ENCODE measurements at regions of chr2 and their contacts with region 1.

Region 1: GRCh38 chr2:232113821-232114220 is 152.3 kb downstream of the DIS3L2 start:
- DNase-seq: no peak
- H3K4me3 ChIP-seq: no peak overlapping the region
- H3K27ac ChIP-seq: no peak overlapping the region
- H3K4me1 ChIP-seq: no peaks in the 10 kb centered on the region
- H3K27me3 ChIP-seq: no peaks in the 10 kb centered on the region
- CTCF ChIP-seq: no peak
- EP300 ChIP-seq: no peak
- POLR2A ChIP-seq: no peak

Region 2: GRCh38 chr2:230885463-230886130 is 1228.2 kb before region 1 on chr2:
- in situ Hi-C with region 1: no loop called
- intact Hi-C with region 1: loop called (anchors 5 kb)
- DNase-seq: no peak
- H3K4me3 ChIP-seq: no peak overlapping the region
- H3K27ac ChIP-seq: no peak overlapping the region
- H3K4me1 ChIP-seq: peaks cover 0 to 6% (median under 1%) of the 10 kb centered on the region in 4 donors
- H3K27me3 ChIP-seq: no peaks in the 10 kb centered on the region
- CTCF ChIP-seq: no peak
- EP300 ChIP-seq: no peak
- POLR2A ChIP-seq: no peak

Region 3: DNA sequence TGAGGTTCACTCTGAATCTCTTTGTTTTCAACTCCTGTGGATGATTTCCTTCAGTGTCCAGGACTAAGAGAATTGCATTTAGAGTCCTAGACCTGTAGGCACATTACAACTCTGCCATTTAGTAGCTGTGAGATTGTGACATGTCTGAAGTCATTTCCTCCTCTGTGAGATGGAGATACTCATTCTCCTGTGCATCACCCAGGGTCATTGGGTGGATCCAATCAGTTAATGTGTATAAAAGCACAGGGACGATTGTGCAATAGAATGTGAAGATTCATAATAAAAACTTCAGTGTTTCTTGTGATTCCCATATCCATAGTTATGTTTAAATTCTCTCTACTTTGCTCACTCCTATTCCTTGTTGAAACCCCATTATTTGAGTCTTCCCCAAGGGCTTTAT is 38.7 kb before region 1 on chr2:
- in situ Hi-C with region 1: no loop called
- intact Hi-C with region 1: loop called (anchors 1 kb)
- DNase-seq: no peak
- H3K4me3 ChIP-seq: no peak overlapping the region
- H3K27ac ChIP-seq: no peak overlapping the region
- H3K4me1 ChIP-seq: peaks cover 0 to 1% (median 0%) of the 10 kb centered on the region in 4 donors
- H3K27me3 ChIP-seq: no peaks in the 10 kb centered on the region
- CTCF ChIP-seq: no peak
- EP300 ChIP-seq: no peak
- POLR2A ChIP-seq: no peak

Region 4: DNA sequence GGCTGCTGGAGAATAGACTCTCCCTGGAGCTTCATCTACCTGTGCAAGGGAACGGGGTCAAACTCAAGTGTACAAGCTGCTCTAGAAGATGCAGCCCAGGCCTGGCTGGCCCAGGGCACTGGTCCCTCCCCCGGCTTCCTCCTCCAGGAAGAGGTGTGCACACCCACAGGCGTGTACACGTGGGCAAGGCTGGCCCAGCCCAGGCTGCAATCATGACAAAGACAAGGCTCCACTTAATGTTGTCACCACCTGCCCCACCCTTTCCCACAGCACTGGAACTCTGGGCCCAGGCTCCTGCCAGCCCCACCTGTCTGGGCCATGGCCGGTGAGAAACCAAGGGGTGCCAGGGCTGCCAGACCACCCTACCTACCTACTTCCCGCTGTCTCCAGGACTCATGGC is 235.1 kb after region 1 on chr2:
- in situ Hi-C with region 1: no loop called
- intact Hi-C with region 1: no loop called
- DNase-seq: peak; percentile 78
- H3K4me3 ChIP-seq: no peak overlapping the region
- H3K27ac ChIP-seq: no peak overlapping the region
- H3K4me1 ChIP-seq: peaks cover 0 to 26% (median 18%) of the 10 kb centered on the region in 4 donors
- H3K27me3 ChIP-seq: peaks cover 45% of the 10 kb centered on the region
- CTCF ChIP-seq: no peak
- EP300 ChIP-seq: no peak
- POLR2A ChIP-seq: no peak

Region 5: DNA sequence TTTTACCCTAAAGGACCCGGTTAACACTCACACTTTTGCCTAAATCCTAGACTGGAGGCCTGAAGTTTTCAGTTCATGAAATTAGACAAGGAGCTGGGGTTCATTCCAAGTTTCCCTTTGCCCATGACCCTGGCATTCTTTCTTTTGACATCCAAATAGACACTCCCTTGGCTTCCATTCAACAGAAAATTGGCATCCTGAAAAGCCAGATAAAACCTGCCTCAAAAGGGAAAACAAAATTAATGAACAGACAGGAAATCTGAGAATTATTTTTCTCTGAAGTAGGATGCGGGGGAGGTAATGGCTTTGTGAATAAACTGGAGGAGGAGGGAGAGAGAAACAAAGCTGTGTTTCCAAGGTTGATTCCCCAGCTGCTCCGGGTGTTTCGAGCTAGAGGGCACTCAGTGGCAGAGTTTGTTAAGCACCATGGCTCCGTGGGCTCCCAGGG is 1977.6 kb after region 1 on chr2:
- in situ Hi-C with region 1: no loop called
- intact Hi-C with region 1: loop called (anchors 5 kb)
- DNase-seq: no peak
- H3K4me3 ChIP-seq: no peak overlapping the region
- H3K27ac ChIP-seq: no peak overlapping the region
- H3K4me1 ChIP-seq: peaks cover 0 to 4% (median 0%) of the 10 kb centered on the region in 4 donors
- H3K27me3 ChIP-seq: no peaks in the 10 kb centered on the region
- CTCF ChIP-seq: no peak
- EP300 ChIP-seq: no peak
- POLR2A ChIP-seq: no peak